ENCODE measurements at regions of chr12 and their contacts with region 1.

Region 1: DNA sequence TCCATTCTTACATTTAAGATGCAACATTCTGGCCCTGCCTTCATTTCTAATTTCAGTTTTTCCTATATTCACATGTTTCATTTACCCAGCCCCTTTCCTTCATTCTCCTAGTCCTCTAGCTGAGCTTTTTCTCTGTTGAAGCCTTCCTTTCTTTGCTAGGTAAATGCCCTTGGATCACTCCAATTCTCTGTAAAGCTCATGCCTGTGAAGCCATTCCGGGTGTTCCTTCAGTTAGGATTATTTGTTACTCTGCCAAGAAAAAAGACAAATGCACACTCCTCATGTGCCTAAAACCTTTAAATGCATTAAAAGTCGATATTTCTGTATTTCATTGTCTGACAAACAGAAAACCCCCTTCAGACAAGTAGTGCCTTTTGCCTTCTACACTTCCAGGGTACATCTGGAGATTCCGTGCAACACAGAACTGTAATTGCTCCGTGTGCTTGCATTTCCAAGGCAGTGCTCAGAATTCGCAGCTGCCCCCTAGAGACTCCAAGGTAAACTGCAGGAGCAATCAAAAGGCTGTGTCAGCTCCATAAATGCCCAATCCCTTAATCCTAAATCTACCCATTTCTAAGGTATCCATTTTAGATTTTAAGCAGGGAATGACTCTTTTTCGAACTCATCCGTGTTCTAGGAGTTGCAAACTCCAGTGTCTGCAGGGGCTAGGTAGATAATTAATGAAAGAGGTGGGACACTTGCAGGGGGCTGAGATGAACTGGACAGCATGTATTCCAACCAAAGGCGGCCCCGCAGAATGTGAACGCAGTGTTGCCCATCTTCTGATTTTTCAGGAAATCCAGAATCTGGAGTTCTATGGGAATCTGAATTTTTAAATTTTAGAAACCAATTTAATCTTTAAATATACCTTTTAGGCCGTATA is 320.2 kb downstream of the GRIN2B start:
- DNase-seq: peak in 4 of 5 donors; percentile 25 to 39 (median 33)
- ATAC-seq: peak in 3 of 4 donors; percentile 54 to 82 (median 81)
- H3K4me3 ChIP-seq: no peak overlapping the region
- H3K27ac ChIP-seq: no peak overlapping the region
- H3K4me1 ChIP-seq: peaks cover 0 to 3% (median 0%) of the 10 kb centered on the region in 12 donors
- H3K27me3 ChIP-seq: peaks cover 0 to 8% (median 0%) of the 10 kb centered on the region in 9 donors
- CTCF ChIP-seq: peak; percentile 73 to 91 (median 82)
- POLR2A ChIP-seq: no peak

Region 2: DNA sequence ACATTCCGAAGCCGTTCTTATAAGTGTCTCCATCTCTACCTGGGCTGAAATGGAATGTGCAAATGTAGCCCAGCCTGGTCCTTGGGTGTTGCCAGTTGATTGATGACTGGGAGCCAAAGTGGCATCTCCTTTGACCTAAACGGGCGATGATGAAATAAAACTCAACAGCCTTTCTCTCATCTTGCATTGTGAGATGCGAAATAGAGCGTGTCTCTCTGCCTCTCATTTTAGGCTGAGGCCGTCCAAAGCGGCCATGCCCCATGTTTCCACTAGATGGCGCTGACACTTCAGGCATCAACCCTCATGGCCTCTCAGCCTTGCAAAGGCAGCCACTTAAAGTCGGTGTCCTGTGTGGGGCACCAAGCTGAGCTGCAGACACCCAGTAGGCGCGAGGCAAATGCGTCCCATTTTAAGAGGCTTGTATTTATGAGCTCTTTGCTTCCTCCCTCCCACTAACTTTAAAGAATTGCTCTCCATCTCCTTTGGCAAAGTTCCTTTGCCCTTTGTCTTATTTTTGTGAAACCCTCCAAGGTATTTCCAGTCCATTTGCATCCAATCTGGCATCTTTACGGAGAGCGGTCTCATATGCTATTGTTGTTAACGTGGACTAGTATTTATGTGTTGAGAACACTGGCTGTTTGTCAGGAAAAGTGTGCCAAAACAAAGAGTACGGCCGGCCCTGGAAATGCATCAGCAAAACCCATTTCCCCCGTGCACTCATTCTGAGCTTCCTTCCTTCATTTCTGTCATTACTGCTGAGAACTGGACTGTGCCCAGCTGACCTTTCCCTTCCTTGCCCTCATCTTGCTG is 744.9 kb before region 1 on chr12:
- intact Hi-C with region 1: loop called in 2 of 10 experiments (anchors 5 to 10 kb)
- DNase-seq: peak; percentile 75 to 88 (median 84)
- ATAC-seq: peak; percentile 86 to 98 (median 96)
- H3K4me3 ChIP-seq: peak overlapping the region in 4 of 12 donors; percentile 10 to 23 (median 16)
- H3K27ac ChIP-seq: peak overlapping the region in 6 of 12 donors; percentile 5 to 46 (median 34)
- H3K4me1 ChIP-seq: peaks cover 0 to 14% (median 7%) of the 10 kb centered on the region in 12 donors
- H3K27me3 ChIP-seq: no peaks in the 10 kb centered on the region
- CTCF ChIP-seq: peak; percentile 96 to 99 (median 98)
- POLR2A ChIP-seq: no peak

Region 3: GRCh38 chr12:13255792-13256691 is 405.2 kb before region 1 on chr12:
- intact Hi-C with region 1: loop called in 1 of 10 experiments (anchors 10 kb)
- DNase-seq: peak; percentile 91 to 95 (median 94)
- ATAC-seq: peak; percentile 97 to 99 (median 99)
- H3K4me3 ChIP-seq: peak overlapping the region in 10 of 12 donors; percentile 17 to 56 (median 42)
- H3K27ac ChIP-seq: peak overlapping the region in 1 of 12 donors; percentile 22
- H3K4me1 ChIP-seq: peaks cover 0 to 25% (median 9%) of the 10 kb centered on the region in 12 donors
- H3K27me3 ChIP-seq: no peaks in the 10 kb centered on the region
- CTCF ChIP-seq: peak; percentile 92 to 99 (median 95)
- POLR2A ChIP-seq: peak in 1 of 2 donors; percentile 14

Region 4: GRCh38 chr12:13278249-13278787 is 382.9 kb before region 1 on chr12:
- intact Hi-C with region 1: loop called (anchors 1 to 10 kb)
- DNase-seq: peak; percentile 57 to 87 (median 71)
- ATAC-seq: peak; percentile 91 to 98 (median 93)
- H3K4me3 ChIP-seq: peak overlapping the region in 2 of 12 donors; percentile 6 to 22
- H3K27ac ChIP-seq: no peak overlapping the region
- H3K4me1 ChIP-seq: peaks cover 0 to 10% (median 5%) of the 10 kb centered on the region in 12 donors
- H3K27me3 ChIP-seq: peaks cover 0 to 33% (median 0%) of the 10 kb centered on the region in 9 donors
- CTCF ChIP-seq: peak; percentile 97 to 99 (median 98)
- POLR2A ChIP-seq: no peak

Region 5: DNA sequence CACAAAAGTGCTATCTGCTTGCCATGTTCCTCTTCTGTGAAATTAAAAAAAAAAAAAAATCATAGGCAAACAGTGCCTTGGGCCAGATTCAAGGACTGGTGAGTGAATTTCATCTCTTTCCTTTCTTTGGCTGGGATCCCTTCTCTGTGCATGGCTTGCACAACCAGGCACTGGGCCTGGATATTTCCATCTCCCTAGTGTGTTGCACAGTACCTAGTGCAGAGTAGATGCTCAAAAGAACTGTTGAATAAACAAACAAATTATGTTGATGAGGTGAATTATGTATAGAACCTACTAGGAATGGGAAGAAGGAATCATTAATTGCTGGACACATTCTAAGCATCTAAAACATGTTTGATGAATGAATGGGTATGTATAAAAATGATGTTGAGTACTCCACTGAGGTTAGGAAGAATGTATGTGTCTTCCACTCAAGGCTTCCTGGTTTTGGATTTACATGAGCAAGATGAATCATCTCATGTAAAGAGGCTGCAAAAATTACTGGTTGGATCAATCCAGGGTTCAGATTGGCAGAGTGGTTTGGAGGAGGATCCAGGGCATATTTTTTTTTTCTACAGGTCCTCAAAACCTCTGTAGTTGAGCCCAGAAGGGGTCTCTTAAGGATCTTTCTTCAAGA is 371.5 kb before region 1 on chr12:
- intact Hi-C with region 1: loop called in 1 of 10 experiments (anchors 10 kb)
- DNase-seq: no peak
- ATAC-seq: peak in 1 of 4 donors; percentile 49
- H3K4me3 ChIP-seq: no peak overlapping the region
- H3K27ac ChIP-seq: no peak overlapping the region
- H3K4me1 ChIP-seq: peaks cover 0 to 6% (median 0%) of the 10 kb centered on the region in 12 donors
- H3K27me3 ChIP-seq: no peaks in the 10 kb centered on the region
- CTCF ChIP-seq: no peak
- POLR2A ChIP-seq: no peak

Region 6: GRCh38 chr12:13362260-13362841 is 298.9 kb before region 1 on chr12:
- intact Hi-C with region 1: loop called (anchors 2 to 10 kb)
- DNase-seq: peak; percentile 35 to 69 (median 49)
- ATAC-seq: peak in 3 of 4 donors; percentile 78 to 87 (median 80)
- H3K4me3 ChIP-seq: no peak overlapping the region
- H3K27ac ChIP-seq: no peak overlapping the region
- H3K4me1 ChIP-seq: no peaks in the 10 kb centered on the region
- H3K27me3 ChIP-seq: peaks cover 0 to 14% (median 4%) of the 10 kb centered on the region in 9 donors
- CTCF ChIP-seq: peak; percentile 59 to 80 (median 76)
- POLR2A ChIP-seq: no peak

Region 7: DNA sequence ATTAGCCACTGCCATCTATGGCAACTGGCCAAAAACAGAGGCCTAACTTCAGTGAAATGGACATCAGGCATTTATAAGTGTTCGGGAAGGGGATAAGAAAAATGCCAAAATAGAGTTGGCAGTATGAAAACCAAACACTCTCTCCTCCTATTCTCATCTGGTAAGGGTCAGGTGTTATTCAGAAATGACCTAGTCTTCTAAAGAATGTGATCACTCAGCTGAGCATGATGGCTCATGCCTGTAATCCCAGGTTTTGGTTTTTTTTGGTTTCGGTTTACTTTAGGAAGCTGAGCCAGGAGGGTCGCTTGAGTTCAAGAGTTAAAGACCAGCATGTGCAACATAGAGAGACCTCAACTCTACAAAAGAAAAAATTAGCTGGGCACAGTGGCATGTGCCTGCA is 149.8 kb after region 1 on chr12:
- intact Hi-C with region 1: no loop called
- DNase-seq: no peak
- ATAC-seq: no peak
- H3K4me3 ChIP-seq: no peak overlapping the region
- H3K27ac ChIP-seq: no peak overlapping the region
- H3K4me1 ChIP-seq: no peaks in the 10 kb centered on the region
- H3K27me3 ChIP-seq: no peaks in the 10 kb centered on the region
- CTCF ChIP-seq: no peak
- POLR2A ChIP-seq: no peak